ENCODE measurements at regions of chr10 and their contacts with region 1.

Region 1: GRCh38 chr10:114550756-114551635 is 107.1 kb downstream of the ABLIM1 start:
- DNase-seq: peak; percentile 39
- H3K4me3 Mint-ChIP-seq: no peak overlapping the region
- H3K27ac Mint-ChIP-seq: no peak overlapping the region
- H3K4me1 Mint-ChIP-seq: peaks cover 13% of the 10 kb centered on the region
- H3K27me3 Mint-ChIP-seq: no peaks in the 10 kb centered on the region
- CTCF ChIP-seq: peak; percentile 42

Region 2: GRCh38 chr10:114279898-114280644 is 270.9 kb before region 1 on chr10:
- CTCF ChIA-PET with region 1: no interaction called
- POLR2A ChIA-PET with region 1: no interaction called
- intact Hi-C with region 1: no loop called
- DNase-seq: no peak
- H3K4me3 Mint-ChIP-seq: no peak overlapping the region
- H3K27ac Mint-ChIP-seq: no peak overlapping the region
- H3K4me1 Mint-ChIP-seq: no peaks in the 10 kb centered on the region
- H3K27me3 Mint-ChIP-seq: no peaks in the 10 kb centered on the region
- CTCF ChIP-seq: no peak

Region 3: GRCh38 chr10:114479307-114479706 is 71.7 kb before region 1 on chr10:
- CTCF ChIA-PET with region 1: interaction called, 114 read pairs
- POLR2A ChIA-PET with region 1: no interaction called
- intact Hi-C with region 1: no loop called
- DNase-seq: no peak
- H3K4me3 Mint-ChIP-seq: no peak overlapping the region
- H3K27ac Mint-ChIP-seq: no peak overlapping the region
- H3K4me1 Mint-ChIP-seq: no peaks in the 10 kb centered on the region
- H3K27me3 Mint-ChIP-seq: no peaks in the 10 kb centered on the region
- CTCF ChIP-seq: no peak

Region 4: DNA sequence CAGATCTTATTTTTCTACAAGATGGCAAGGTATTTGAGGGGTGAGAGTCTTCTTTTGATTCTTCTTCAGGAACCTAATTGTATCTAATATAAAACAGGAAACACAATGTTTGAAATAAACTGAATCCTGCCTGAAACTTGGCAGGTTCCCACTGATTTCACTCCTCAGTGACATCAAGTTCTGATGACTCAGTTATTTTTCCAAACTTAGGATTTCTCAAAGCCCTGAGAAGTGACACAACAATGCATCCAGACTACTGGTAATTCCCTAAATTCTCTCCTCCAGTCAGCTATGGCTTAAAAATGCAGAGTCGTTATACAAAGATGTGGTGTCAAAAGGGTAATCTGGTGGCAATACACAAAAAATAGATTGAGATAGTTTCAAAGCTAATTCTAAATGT is 26.1 kb after region 1 on chr10:
- CTCF ChIA-PET with region 1: interaction called, 21 read pairs
- POLR2A ChIA-PET with region 1: interaction called, 5 read pairs
- intact Hi-C with region 1: no loop called
- DNase-seq: peak; percentile 90
- H3K4me3 Mint-ChIP-seq: no peak overlapping the region
- H3K27ac Mint-ChIP-seq: peak overlapping the region; percentile 92
- H3K4me1 Mint-ChIP-seq: peaks cover 37% of the 10 kb centered on the region
- H3K27me3 Mint-ChIP-seq: no peaks in the 10 kb centered on the region
- CTCF ChIP-seq: no peak

Region 5: GRCh38 chr10:114684085-114684821 is 133.3 kb after region 1 on chr10:
- CTCF ChIA-PET with region 1: interaction called, 10 read pairs
- POLR2A ChIA-PET with region 1: interaction called, 4 read pairs
- intact Hi-C with region 1: no loop called
- DNase-seq: peak; percentile 74
- H3K4me3 Mint-ChIP-seq: peak overlapping the region; percentile 67
- H3K27ac Mint-ChIP-seq: peak overlapping the region; percentile 74
- H3K4me1 Mint-ChIP-seq: peaks cover 33% of the 10 kb centered on the region
- H3K27me3 Mint-ChIP-seq: no peaks in the 10 kb centered on the region
- CTCF ChIP-seq: no peak

Region 6: DNA sequence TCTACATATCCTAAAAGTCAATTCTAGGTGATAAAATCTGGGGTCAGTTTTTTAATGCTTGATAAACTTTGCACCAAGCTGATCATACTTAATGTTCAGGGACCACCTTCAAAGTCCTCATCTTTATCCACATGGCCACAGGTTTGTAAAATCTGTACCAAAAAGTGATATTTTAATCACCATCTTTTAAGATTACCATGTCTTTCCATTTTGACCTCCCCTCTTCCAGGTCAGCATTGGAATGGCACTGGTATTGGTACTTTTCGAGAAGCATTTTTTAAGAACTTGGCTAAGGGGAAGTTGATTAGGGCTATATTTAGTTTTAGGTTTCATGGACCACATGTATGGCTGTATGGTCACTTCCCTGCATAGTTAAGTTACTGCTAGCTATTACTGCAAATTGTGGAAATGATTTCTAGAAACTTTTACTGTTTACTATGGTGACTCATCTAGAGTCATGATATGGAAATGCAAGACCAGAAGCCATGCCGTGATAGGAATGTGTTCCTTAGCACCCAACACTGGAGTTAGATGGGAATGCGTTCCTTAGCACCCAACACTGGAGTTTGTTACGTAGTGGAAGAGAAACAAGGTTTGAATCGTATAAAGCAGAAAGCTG is 157.8 kb after region 1 on chr10:
- CTCF ChIA-PET with region 1: interaction called, 80 read pairs
- POLR2A ChIA-PET with region 1: interaction called, 9 read pairs
- intact Hi-C with region 1: no loop called
- DNase-seq: peak; percentile 87
- H3K4me3 Mint-ChIP-seq: no peak overlapping the region
- H3K27ac Mint-ChIP-seq: peak overlapping the region; percentile 30
- H3K4me1 Mint-ChIP-seq: peaks cover 47% of the 10 kb centered on the region
- H3K27me3 Mint-ChIP-seq: no peaks in the 10 kb centered on the region
- CTCF ChIP-seq: no peak

Region 7: DNA sequence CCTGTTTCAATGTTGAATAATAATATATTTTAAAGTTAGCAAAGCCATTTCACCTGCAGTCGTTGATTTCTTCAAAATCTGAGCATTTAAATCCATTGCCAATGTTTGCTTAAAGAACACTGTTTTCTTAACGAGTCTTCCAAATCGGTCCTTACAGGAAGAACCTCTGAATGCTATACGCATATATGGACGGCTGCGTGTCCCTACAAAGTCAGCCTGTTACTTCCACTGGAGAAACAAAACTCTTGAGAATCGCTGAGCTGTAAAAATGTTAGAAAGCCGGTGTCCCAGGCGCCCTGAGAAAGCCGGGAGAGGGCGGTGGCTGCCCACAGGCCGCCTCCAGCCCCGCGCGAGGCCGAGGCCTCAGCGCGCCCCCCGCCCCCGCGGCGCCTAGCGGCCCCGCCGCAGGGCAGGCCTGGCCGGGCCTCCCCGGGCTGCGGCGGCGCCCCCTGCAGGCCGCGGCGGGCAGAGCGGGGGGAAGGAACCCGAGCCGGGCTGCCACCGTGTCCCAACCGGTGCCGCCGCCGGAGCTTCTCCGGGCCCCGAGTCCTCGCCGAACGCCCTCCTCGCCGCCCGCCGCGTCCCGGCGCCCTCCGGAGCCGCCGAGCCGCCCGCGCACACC is 270.4 kb after region 1 on chr10 and contains the start of gene FHIP2A:
- CTCF ChIA-PET with region 1: interaction called, 33 read pairs
- POLR2A ChIA-PET with region 1: interaction called, 8 read pairs
- intact Hi-C with region 1: no loop called
- DNase-seq: peak; percentile 71
- H3K4me3 Mint-ChIP-seq: peak within 1 kb of the TSS; percentile 85
- H3K27ac Mint-ChIP-seq: peak within 1 kb of the TSS; percentile 97
- H3K4me1 Mint-ChIP-seq: peaks cover 20% of the 10 kb centered on the region
- H3K27me3 Mint-ChIP-seq: no peaks in the 10 kb centered on the region
- CTCF ChIP-seq: peak; percentile 34
- total RNA-seq, gene FHIP2A: 17.2 and 25.9 TPM in 2 replicates

Region 8: DNA sequence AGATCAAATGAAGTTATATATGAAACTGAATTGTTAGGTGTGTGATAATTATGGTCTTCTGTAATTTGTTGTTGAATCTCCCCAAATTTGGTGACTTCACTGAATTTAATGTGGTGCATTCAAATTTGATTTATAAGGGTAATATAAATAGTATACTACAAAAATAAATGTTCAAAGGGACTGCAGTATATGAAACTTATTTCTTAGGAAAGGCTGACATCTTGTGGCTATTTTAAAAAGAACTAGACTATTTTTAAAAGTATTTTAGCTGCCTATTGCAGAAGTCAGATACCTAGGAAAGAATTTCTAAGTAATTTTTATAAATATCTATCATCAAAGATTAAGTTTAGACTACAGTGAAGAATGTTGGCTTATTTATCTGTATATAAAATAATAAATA is 578.8 kb after region 1 on chr10:
- CTCF ChIA-PET with region 1: interaction called, 7 read pairs
- POLR2A ChIA-PET with region 1: no interaction called
- intact Hi-C with region 1: loop called (anchors 2 kb)
- DNase-seq: peak; percentile 26
- H3K4me3 Mint-ChIP-seq: no peak overlapping the region
- H3K27ac Mint-ChIP-seq: no peak overlapping the region
- H3K4me1 Mint-ChIP-seq: no peaks in the 10 kb centered on the region
- H3K27me3 Mint-ChIP-seq: peaks cover 14% of the 10 kb centered on the region
- CTCF ChIP-seq: peak; percentile 46